ENCODE measurements at regions of chr11 and their contacts with region 1.

Region 1: DNA sequence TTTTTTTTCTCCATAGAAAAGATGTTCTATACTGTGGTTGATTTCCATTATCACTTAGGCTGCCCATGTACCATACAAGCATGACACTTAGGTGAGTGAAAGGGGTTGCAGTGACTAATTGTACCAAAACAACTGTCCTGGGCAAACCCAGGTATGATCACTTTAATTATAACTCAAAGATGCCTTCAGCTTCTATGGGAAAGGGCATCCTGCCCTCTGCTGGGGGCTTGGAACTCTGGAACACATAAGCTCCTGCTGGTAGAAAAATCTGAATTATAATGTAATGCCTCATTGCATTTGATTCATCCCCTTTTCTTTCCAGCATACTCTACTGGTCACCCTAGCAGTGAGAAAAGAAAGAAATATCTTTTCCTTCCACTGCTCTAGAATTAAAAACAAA is 206.3 kb downstream of the DDX10 start:
- DNase-seq: peak; percentile 71
- ATAC-seq: peak; percentile 62
- H3K4me3 ChIP-seq: no peak overlapping the region
- H3K27ac ChIP-seq: peak overlapping the region; percentile 79
- H3K4me1 ChIP-seq: peaks cover 40% of the 10 kb centered on the region
- H3K27me3 ChIP-seq: no peaks in the 10 kb centered on the region
- CTCF ChIP-seq: peak; percentile 88

Region 2: DNA sequence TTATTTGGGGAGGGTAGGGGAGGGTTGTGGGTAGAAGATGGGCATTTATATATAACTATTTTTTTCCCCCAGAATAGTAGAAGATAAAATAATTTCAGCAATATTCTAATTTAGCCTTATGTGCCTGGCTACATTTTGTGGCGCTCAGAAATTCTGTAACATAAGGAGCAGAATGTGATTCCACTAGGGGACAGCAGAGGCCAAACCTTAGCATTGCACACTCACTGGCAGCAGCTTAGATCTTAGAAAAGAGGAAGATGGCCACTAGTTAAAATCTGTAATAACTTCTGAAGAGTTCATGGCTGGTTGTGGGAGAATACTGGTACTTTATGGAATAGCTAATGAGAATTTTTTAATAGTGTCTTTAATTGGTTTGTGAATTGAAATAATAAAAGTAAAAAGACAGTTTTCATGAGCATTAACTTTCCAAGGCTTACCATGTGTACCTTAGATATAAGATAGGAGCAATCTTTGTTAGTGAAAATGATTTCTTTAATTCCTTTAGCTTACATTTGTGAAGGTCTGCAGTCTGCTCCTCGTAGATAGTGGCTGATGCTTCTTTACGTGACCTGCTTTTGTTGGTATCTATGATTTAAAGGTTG is 173.2 kb before region 1 on chr11:
- CTCF ChIA-PET with region 1: interaction called, 12 read pairs
- POLR2A ChIA-PET with region 1: no interaction called
- intact Hi-C with region 1: loop called (anchors 1 kb)
- DNase-seq: peak; percentile 79
- ATAC-seq: peak; percentile 82
- H3K4me3 ChIP-seq: no peak overlapping the region
- H3K27ac ChIP-seq: no peak overlapping the region
- H3K4me1 ChIP-seq: peaks cover 13% of the 10 kb centered on the region
- H3K27me3 ChIP-seq: no peaks in the 10 kb centered on the region
- CTCF ChIP-seq: peak; percentile 96

Region 3: DNA sequence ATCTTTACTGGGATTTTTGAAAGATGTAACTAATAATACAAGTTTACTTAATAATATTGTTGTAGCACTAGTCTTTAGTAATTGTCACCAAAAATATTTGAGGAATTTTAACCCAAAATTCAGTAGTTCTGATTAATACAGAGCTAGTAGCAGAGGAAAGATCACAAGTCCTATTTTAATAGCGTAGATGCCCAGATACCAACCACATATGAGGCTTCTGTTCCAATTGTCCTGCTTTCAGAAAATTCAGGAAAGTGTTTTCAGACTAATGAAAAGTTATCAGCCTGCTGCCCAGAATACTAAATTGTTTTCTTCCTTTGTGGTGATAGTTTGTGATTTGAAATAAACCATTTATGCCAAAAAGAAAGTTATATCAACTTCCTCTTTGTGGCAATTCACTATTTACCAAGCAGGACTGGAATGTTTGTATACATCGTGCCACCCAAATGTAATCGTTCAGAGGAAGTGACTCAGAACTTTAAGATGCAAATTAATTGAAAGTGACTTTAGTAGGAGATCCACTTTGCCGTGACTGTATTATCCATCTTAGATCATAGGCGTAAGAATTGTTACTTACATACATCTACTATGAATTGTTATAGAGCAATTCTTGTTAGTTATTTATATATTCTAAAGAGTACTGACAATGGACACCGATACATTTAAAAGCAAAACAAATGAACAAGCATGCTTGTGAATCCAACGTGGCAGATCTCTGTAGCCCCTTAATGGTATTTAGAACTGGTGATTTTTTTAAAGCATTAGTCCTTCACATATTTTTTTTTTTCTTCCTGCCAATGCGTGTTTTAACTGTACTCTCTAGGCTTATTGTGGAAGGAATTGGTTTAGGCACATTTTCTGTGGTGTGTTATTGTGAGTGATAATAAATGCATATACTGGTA is 24.7 kb after region 1 on chr11:
- CTCF ChIA-PET with region 1: interaction called, 3 read pairs
- POLR2A ChIA-PET with region 1: no interaction called
- intact Hi-C with region 1: loop called (anchors 2 kb)
- DNase-seq: peak; percentile 95
- ATAC-seq: peak; percentile 92
- H3K4me3 ChIP-seq: peak overlapping the region; percentile 31; the same call in 1 of the 2 replicates
- H3K27ac ChIP-seq: peak overlapping the region; percentile 67
- H3K4me1 ChIP-seq: peaks cover 34% of the 10 kb centered on the region
- H3K27me3 ChIP-seq: no peaks in the 10 kb centered on the region
- CTCF ChIP-seq: no peak

Region 4: DNA sequence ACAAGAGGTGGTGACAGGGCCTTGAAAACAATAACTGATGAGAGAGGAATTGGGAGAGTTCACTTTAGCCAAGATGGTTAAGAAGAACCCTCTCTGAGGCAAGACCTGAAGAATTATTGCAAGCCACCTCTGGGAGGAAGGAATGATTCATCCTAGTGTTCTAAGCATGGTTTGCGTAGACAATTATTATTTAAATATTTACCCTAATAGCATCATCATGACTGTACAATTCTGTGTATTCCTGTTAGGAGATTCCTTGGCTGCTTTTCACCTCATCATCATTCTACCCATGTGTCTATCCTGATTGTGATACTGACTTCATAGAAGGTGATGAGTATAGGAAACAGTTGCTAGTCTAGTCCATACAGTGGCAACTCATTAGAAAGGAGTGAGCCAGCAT is 58.1 kb after region 1 on chr11:
- CTCF ChIA-PET with region 1: no interaction called
- POLR2A ChIA-PET with region 1: interaction called, 3 read pairs
- intact Hi-C with region 1: loop called (anchors 1 kb)
- DNase-seq: peak; percentile 97
- ATAC-seq: peak; percentile 76
- H3K4me3 ChIP-seq: no peak overlapping the region
- H3K27ac ChIP-seq: peak overlapping the region; percentile 93
- H3K4me1 ChIP-seq: peaks cover 51% of the 10 kb centered on the region
- H3K27me3 ChIP-seq: no peaks in the 10 kb centered on the region
- CTCF ChIP-seq: no peak

Region 5: GRCh38 chr11:109939166-109939810 is 1068.1 kb after region 1 on chr11:
- CTCF ChIA-PET with region 1: interaction called, 3 read pairs
- POLR2A ChIA-PET with region 1: no interaction called
- intact Hi-C with region 1: loop called (anchors 10 kb)
- DNase-seq: peak; percentile 94
- ATAC-seq: peak; percentile 68
- H3K4me3 ChIP-seq: no peak overlapping the region
- H3K27ac ChIP-seq: peak overlapping the region; percentile 85
- H3K4me1 ChIP-seq: peaks cover 22% of the 10 kb centered on the region
- H3K27me3 ChIP-seq: no peaks in the 10 kb centered on the region
- CTCF ChIP-seq: peak; percentile 97